ENCODE measurements at regions of chr13 and their contacts with region 1.

Region 1: DNA sequence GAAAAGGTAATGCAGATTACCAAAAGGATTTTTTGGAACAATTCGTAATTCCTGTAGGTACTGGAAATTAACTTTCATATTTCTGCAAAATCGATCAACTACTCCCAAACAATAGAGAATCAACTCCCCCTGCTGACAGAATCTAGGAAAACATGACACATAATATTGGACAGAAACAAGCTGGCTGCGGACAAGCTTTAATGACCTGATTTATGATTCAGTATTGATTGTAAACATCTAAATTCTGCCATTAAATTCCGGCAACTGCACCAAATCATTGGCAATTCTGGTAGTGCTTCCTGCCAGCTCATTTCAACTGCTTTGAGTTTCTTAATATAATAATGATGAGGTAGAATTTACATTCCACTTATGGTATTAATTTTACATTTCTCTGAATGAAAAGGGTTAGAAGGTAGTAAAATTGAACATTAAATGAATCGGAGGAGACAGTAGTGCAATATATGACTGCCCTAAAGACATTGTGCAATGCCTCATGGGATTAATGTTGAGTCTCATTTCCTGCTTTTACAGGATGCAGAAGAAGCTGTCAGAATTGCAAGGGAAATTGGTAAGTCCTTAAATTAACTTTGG is 146.5 kb downstream of the PCCA start:
- DNase-seq: peak; percentile 51
- H3K4me3 ChIP-seq: 0 out of 4 replicates have a peak overlapping the region, but pooled peaks of 1 of the 2 experiments have one; percentile 7
- H3K27ac ChIP-seq: peak overlapping the region in 1 of 2 experiments; percentile 21; a peak in 2 of 4 replicates
- H3K4me1 ChIP-seq: peaks cover 0 to 8% of the 10 kb centered on the region in 2 experiments; a peak in 2 of 4 replicates
- H3K27me3 ChIP-seq: no peaks in the 10 kb centered on the region
- CTCF ChIP-seq: peak; percentile 78
- EP300 ChIP-seq: peak in 1 of 2 experiments; percentile 72; a peak in 2 of 4 replicates
- RAD21 ChIP-seq: peak; percentile 82

Region 2: GRCh38 chr13:100514788-100515409 is 279.5 kb after region 1 on chr13:
- CTCF ChIA-PET with region 1: interaction called, 15 read pairs
- POLR2A ChIA-PET with region 1: no interaction called
- DNase-seq: peak; percentile 92
- H3K4me3 ChIP-seq: no peak overlapping the region; a peak in 1 of 4 replicates
- H3K27ac ChIP-seq: no peak overlapping the region
- H3K4me1 ChIP-seq: peaks cover 14 to 19% of the 10 kb centered on the region in 2 experiments; a peak in 3 of 4 replicates
- H3K27me3 ChIP-seq: no peaks in the 10 kb centered on the region
- CTCF ChIP-seq: peak; percentile 99
- EP300 ChIP-seq: no peak
- RAD21 ChIP-seq: peak; percentile 99

Region 3: DNA sequence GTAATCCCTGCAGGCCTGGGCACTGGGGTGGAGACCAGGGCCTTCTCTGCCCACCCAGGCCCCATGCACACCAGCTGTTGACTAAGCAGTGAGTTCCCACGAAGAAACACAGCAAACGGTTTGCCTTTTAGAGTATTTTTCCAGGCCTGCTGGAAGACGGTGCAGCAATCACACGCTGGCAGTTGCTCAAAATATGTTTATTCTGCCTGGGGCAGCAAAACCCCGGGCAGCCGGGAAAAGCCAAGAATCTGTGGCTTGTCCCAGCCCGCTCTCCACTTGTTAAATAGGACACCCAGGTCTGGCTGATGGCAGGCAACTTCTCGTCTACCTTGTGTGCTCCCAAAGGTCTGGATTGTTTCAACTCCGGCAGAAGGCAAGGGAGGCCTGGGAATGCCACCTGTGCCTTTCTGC is 312.4 kb after region 1 on chr13:
- CTCF ChIA-PET with region 1: no interaction called
- POLR2A ChIA-PET with region 1: no interaction called
- DNase-seq: peak; percentile 61
- H3K4me3 ChIP-seq: no peak overlapping the region
- H3K27ac ChIP-seq: peak overlapping the region in 1 of 2 experiments; percentile 74; a peak in 1 of 4 replicates
- H3K4me1 ChIP-seq: peaks cover 0 to 25% of the 10 kb centered on the region in 2 experiments; a peak in 1 of 4 replicates
- H3K27me3 ChIP-seq: no peaks in the 10 kb centered on the region
- CTCF ChIP-seq: no peak
- EP300 ChIP-seq: no peak; a peak in 1 of 4 replicates
- RAD21 ChIP-seq: no peak

Measured in SK-N-SH (cell line).